Left ventricle myocardium inferior (tissue), 1 donor: ENCODE measurements at regions of chr12 and their contacts with region 1.

Region 1: GRCh38 chr12:54993161-54993835 is 8.7 kb upstream of the TESPA1 start:
- DNase-seq: no peak
- H3K4me3 ChIP-seq: no peak overlapping the region
- H3K27ac ChIP-seq: no peak overlapping the region
- H3K4me1 ChIP-seq: peaks cover 11% of the 10 kb centered on the region
- H3K27me3 ChIP-seq: peaks cover 32% of the 10 kb centered on the region
- CTCF ChIP-seq: peak; percentile 92

Region 2: GRCh38 chr12:54882079-54882478 is 111.2 kb before region 1 on chr12:
- intact Hi-C with region 1: no loop called
- DNase-seq: no peak
- H3K4me3 ChIP-seq: no peak overlapping the region
- H3K27ac ChIP-seq: no peak overlapping the region
- H3K4me1 ChIP-seq: no peaks in the 10 kb centered on the region
- H3K27me3 ChIP-seq: no peaks in the 10 kb centered on the region
- CTCF ChIP-seq: no peak

Region 3: GRCh38 chr12:55073043-55074022 is 80.0 kb after region 1 on chr12:
- intact Hi-C with region 1: loop called (anchors 5 kb)
- DNase-seq: peak; percentile 61
- H3K4me3 ChIP-seq: no peak overlapping the region
- H3K27ac ChIP-seq: no peak overlapping the region
- H3K4me1 ChIP-seq: no peaks in the 10 kb centered on the region
- H3K27me3 ChIP-seq: peaks cover 37% of the 10 kb centered on the region
- CTCF ChIP-seq: peak; percentile 91